CD8-positive, alpha-beta T cell (primary cell): ENCODE measurements at regions of chr14 and their contacts with region 1.

Region 1: GRCh38 chr14:91264151-91265150 is 19.9 kb upstream of the GPR68 start:
- DNase-seq: peak in 5 of 9 experiments; percentile 21 to 67 (median 52)
- ATAC-seq: peak; percentile 45
- H3K4me3 ChIP-seq: peak overlapping the region in 1 of 2 experiments; percentile 28
- H3K4me3 Mint-ChIP-seq: peak overlapping the region; percentile 64
- H3K27ac ChIP-seq: no peak overlapping the region
- H3K27ac Mint-ChIP-seq: peak overlapping the region; percentile 32
- H3K4me1 ChIP-seq: peaks cover 19% of the 10 kb centered on the region
- H3K4me1 Mint-ChIP-seq: peaks cover 42% of the 10 kb centered on the region
- H3K27me3 ChIP-seq: no peaks in the 10 kb centered on the region
- H3K27me3 Mint-ChIP-seq: no peaks in the 10 kb centered on the region
- CTCF ChIP-seq: no peak

Region 2: DNA sequence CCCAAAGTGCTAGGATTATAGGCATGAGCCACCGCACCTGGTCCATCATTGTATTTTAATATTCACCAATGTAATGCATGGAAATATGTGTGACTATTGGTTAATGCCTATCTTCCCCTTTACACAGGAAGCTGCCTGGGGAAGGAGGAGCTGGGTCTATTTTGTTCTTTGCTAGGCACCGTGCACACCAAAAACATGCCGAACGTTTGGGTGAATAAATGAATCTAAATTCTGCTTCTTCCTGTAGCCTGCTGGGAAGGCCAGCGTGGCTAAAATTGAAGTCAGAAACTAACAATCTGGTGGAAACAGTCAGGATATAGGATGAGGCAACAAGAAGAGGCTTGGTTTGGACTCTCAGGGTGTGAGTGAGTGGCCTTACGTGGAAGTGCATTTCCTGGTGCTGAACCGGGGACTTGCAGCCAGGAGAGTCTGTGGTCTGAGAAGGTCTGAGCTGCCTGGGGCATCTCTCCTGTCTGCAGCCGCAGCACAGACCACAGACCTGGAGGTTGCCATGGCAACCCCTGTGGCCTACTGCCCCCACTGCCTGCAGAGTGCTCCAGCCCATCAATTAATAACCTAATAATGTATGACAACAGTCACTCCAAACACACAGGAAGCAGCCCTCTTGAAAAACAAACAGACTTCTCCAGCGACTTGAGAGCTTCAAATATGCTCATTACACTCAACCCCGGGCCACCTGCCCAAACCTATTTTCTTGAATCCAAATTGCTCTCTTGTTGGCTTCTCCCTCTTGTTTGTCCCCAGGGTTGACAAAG is 14.4 kb before region 1 on chr14:
- CTCF ChIA-PET with region 1: interaction called, 5 read pairs
- POLR2A ChIA-PET with region 1: interaction called, 6 read pairs
- intact Hi-C with region 1: loop called in 1 of 2 experiments (anchors 2 kb)
- DNase-seq: peak in 5 of 9 experiments; percentile 28 to 78 (median 45)
- ATAC-seq: no peak
- H3K4me3 ChIP-seq: no peak overlapping the region
- H3K4me3 Mint-ChIP-seq: peak overlapping the region; percentile 47
- H3K27ac ChIP-seq: peak overlapping the region; percentile 43 to 66
- H3K27ac Mint-ChIP-seq: peak overlapping the region; percentile 92
- H3K4me1 ChIP-seq: peaks cover 70% of the 10 kb centered on the region
- H3K4me1 Mint-ChIP-seq: peaks cover 78% of the 10 kb centered on the region
- H3K27me3 ChIP-seq: no peaks in the 10 kb centered on the region
- H3K27me3 Mint-ChIP-seq: no peaks in the 10 kb centered on the region
- CTCF ChIP-seq: no peak

Region 3: DNA sequence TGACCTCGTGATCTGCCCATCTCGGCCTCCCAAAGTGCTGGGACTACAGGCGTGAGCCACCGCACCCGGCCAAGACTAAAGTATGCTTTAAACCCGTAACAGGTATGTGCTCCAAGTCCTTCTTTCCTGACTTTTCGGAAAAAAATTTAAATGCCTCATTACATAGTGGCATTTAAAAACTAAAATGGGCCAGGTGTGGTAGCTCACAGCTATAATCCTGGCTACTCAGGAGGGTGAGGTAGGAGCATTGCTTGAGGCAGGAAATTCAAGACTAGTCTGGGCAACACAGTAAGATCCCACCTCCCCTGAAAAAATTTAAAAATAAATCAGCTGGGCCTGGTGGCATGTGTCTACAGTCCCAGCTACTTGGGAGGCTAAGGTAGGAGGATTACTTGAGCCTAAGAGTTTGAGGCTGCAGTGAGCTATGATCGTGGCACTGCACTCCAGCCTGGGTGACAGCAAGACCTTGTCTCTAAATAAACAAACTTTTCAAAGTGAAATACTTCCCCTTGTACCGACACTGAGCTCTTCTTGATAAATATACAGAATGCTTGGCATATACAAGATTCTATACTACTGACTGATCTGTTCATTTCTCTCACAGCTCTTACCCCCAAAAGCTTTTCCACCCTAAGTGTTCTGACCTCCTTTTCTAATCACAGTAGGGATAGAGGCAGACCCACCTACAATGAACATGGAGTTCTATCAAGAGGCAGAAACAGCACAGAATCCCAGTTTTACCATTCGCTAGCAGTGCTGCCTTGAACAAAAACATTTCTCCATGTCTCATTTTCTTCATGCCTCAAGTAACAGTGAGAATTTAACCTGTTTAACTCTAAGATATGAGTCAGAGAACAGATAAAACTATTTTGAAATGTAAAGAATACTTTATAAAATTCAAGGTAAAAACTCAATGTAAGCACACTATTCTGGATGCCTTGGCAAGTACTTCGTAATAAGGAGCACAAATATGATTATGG is 237.8 kb after region 1 on chr14:
- CTCF ChIA-PET with region 1: no interaction called
- POLR2A ChIA-PET with region 1: no interaction called
- intact Hi-C with region 1: no loop called
- DNase-seq: no peak
- ATAC-seq: no peak
- H3K4me3 ChIP-seq: no peak overlapping the region
- H3K4me3 Mint-ChIP-seq: no peak overlapping the region
- H3K27ac ChIP-seq: no peak overlapping the region
- H3K27ac Mint-ChIP-seq: no peak overlapping the region
- H3K4me1 ChIP-seq: peaks cover 73% of the 10 kb centered on the region
- H3K4me1 Mint-ChIP-seq: peaks cover 80% of the 10 kb centered on the region
- H3K27me3 ChIP-seq: no peaks in the 10 kb centered on the region
- H3K27me3 Mint-ChIP-seq: no peaks in the 10 kb centered on the region
- CTCF ChIP-seq: no peak